ENCODE measurements at regions of chr22 and their contacts with region 1.

Region 1: GRCh38 chr22:24189249-24190158 is 8.2 kb downstream of the SUSD2 start:
- DNase-seq: peak; percentile 72 to 83 (median 78)
- H3K4me3 ChIP-seq: no peak overlapping the region
- H3K27ac ChIP-seq: peak overlapping the region in 1 of 5 donors; percentile 24
- H3K4me1 ChIP-seq: peaks cover 0 to 6% of the 10 kb centered on the region in 2 donors
- H3K27me3 ChIP-seq: no peaks in the 10 kb centered on the region
- CTCF ChIP-seq: peak; percentile 79 to 98 (median 96)
- POLR2A ChIP-seq: no peak

Region 2: DNA sequence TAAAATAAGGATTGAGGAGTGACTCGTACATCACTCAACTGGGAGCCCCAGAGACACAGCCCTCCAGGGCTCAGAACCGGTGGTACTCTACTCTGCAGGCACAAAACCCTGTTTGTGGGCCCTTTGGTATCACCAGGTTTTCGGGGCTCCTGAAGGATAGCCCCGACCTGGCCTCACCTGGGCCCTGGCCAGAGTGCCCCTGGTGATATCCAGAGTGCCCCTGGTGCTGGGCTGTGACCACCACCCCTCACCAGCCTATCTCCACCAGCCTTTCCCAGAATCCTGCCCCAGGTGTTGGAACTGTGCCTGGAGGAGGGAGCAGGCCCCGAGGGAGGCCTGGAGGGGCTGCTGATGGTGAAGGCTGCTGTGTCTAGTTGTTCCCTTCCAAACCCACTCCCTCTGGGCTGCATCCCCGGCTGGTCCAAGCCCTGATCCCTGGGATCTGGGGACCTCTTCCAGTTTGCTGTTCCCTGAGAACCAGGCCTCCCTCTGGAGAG is 57.6 kb after region 1 on chr22:
- intact Hi-C with region 1: loop called (anchors 2 kb)
- DNase-seq: no peak
- H3K4me3 ChIP-seq: no peak overlapping the region
- H3K27ac ChIP-seq: peak overlapping the region in 4 of 5 donors; percentile 44 to 94 (median 65)
- H3K4me1 ChIP-seq: peaks cover 0 to 6% of the 10 kb centered on the region in 2 donors
- H3K27me3 ChIP-seq: no peaks in the 10 kb centered on the region
- CTCF ChIP-seq: no peak
- POLR2A ChIP-seq: no peak

Region 3: GRCh38 chr22:24353121-24353520 is 163.6 kb after region 1 on chr22:
- intact Hi-C with region 1: no loop called
- DNase-seq: no peak
- H3K4me3 ChIP-seq: no peak overlapping the region
- H3K27ac ChIP-seq: no peak overlapping the region
- H3K4me1 ChIP-seq: peaks cover 0 to 3% of the 10 kb centered on the region in 2 donors
- H3K27me3 ChIP-seq: no peaks in the 10 kb centered on the region
- CTCF ChIP-seq: no peak
- POLR2A ChIP-seq: no peak